ENCODE measurements at regions of chr1 and their contacts with region 1.

Region 1: GRCh38 chr1:205658943-205659581 is 21.2 kb downstream of the SLC45A3 start:
- DNase-seq: peak; percentile 85 to 95 (median 95)
- ATAC-seq: peak; percentile 79 to 85
- H3K4me3 ChIP-seq: no peak overlapping the region
- H3K27ac ChIP-seq: no peak overlapping the region
- H3K4me1 ChIP-seq: peaks cover 5% of the 10 kb centered on the region
- H3K27me3 ChIP-seq: no peaks in the 10 kb centered on the region

Region 2: GRCh38 chr1:205528887-205529825 is 129.9 kb before region 1 on chr1:
- intact Hi-C with region 1: loop called in 2 of 4 experiments (anchors 5 kb)
- DNase-seq: peak; percentile 83 to 93 (median 92)
- ATAC-seq: peak; percentile 64 to 79
- H3K4me3 ChIP-seq: no peak overlapping the region
- H3K27ac ChIP-seq: no peak overlapping the region
- H3K4me1 ChIP-seq: no peaks in the 10 kb centered on the region
- H3K27me3 ChIP-seq: no peaks in the 10 kb centered on the region

Region 3: DNA sequence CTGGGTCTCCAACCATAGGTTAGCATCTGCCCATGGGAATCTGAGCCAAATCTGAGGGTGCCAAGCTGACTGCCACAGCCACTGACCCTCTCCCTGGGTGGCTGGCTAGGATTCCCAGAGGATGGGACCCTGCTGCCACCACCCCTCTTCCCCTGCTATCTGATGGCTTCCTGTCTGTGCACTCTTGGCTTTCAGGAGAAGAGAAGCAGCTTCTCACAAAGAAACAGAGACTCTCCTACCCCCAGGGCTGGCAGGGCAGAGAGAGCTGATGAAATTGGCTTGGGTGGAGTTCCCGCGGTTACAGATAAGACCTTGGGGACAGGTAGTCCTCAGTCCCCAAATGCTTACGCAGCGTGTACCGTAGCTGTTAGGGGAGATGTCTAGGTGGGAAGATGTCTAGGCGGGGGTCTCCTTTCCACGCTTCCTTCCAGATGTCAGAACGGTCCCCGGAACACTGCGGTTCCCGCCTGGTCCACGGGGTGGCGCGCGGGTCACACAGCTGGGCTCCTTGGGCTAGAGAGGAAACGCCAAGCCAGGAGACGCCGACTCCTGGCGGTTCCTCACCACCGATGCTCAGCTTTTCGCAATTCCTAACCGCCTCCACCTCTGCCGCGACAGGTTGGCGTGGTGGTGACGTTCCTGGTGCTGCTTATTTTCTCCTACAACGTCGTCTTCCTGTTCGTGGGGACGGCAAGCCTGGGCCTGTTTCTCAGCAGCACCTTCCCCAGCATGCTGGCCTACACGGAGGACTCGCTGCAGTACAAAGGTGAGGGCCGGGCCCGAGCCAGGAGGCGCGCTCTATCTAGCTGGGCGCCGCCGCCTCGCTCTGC is 67.3 kb before region 1 on chr1:
- intact Hi-C with region 1: loop called (anchors 2 to 5 kb)
- DNase-seq: peak; percentile 80 to 95 (median 94)
- ATAC-seq: peak; percentile 90 to 92
- H3K4me3 ChIP-seq: peak overlapping the region; percentile 15
- H3K27ac ChIP-seq: no peak overlapping the region
- H3K4me1 ChIP-seq: no peaks in the 10 kb centered on the region
- H3K27me3 ChIP-seq: no peaks in the 10 kb centered on the region

Region 4: GRCh38 chr1:205700865-205701401 is 41.9 kb after region 1 on chr1:
- intact Hi-C with region 1: loop called in 2 of 4 experiments (anchors 5 kb)
- DNase-seq: peak in 1 of 3 donors; percentile 69
- ATAC-seq: peak; percentile 62 to 73
- H3K4me3 ChIP-seq: no peak overlapping the region
- H3K27ac ChIP-seq: no peak overlapping the region
- H3K4me1 ChIP-seq: peaks cover 8% of the 10 kb centered on the region
- H3K27me3 ChIP-seq: no peaks in the 10 kb centered on the region

Region 5: DNA sequence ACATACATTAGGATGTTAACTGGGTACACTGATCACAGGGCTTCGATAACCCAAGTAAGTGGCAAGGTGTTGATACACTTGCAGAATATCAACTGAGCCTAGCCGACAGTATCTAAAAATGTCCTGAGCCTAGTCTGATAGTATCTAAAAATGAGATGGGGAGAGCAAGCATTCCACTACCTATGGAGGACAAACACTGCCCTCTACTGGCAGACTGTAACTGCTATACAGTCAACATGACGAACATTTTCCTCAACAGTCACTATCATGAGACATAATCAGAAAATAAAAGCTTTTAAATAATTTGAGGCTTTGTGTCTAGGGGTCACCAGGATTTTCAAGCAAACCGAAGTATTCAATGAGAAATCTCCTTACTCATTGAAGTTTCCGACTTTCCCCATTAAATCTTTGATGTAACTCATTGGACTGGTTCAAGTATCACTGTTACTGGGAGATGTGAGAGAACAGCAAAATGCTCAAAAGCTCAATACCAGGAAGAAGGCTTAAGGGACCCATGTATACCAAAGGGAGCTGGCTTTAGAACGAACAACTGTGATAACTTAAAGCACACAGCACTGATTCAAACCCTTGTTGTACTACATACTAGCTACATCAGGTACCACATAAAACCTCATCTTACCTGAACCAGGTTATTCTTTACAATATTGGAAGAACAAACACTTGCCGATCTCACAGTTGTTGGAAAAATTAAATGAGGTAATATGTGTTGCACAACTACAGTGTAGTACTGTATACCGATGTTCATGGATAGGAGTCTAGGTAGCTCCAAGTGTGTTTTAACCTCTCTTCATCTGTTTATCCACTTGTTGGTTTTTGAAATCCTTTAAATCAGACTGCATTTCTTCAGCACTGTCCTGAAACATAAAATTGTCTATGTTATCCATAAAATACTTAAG is 52.3 kb after region 1 on chr1:
- intact Hi-C with region 1: loop called (anchors 2 to 5 kb)
- DNase-seq: peak in 1 of 3 donors; percentile 25
- ATAC-seq: peak; percentile 78 to 79
- H3K4me3 ChIP-seq: no peak overlapping the region
- H3K27ac ChIP-seq: no peak overlapping the region
- H3K4me1 ChIP-seq: peaks cover 7% of the 10 kb centered on the region
- H3K27me3 ChIP-seq: no peaks in the 10 kb centered on the region

Region 6: DNA sequence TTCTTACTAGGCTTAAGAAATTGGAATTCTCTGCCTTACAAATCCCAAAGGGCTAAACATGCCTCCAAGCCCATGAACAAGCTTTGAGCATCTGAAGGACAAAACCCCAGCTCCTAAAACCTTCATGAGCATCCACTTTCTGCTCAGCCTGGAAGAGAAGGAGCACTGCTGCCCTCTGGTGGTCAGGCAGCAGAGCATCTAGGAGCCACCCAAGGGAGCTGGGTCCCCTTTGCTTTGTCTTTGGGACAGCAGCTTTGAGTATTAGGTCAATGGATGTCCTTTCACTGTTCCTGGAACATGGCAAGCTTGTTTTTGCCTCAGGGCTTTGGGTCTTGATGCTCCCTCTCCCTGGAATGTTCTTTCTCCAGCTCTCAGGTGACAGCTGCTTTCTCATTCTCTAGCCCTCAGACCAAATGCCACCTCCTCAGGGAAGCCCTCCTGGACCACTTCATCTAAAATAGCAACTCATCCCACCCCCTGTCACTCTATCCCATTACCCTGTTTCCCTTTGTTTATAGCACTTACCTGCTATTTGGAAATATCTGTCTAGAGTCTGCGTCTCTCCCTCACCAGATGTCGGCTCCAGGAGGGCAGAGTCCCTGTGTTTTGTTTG is 318.4 kb after region 1 on chr1:
- intact Hi-C with region 1: loop called in 2 of 4 experiments (anchors 5 to 10 kb)
- DNase-seq: peak; percentile 65 to 89 (median 81)
- ATAC-seq: peak; percentile 76 to 78
- H3K4me3 ChIP-seq: no peak overlapping the region
- H3K27ac ChIP-seq: peak overlapping the region; percentile 93
- H3K4me1 ChIP-seq: peaks cover 4% of the 10 kb centered on the region
- H3K27me3 ChIP-seq: no peaks in the 10 kb centered on the region